ENCODE measurements at regions of chr22 and their contacts with region 1.

Region 1: DNA sequence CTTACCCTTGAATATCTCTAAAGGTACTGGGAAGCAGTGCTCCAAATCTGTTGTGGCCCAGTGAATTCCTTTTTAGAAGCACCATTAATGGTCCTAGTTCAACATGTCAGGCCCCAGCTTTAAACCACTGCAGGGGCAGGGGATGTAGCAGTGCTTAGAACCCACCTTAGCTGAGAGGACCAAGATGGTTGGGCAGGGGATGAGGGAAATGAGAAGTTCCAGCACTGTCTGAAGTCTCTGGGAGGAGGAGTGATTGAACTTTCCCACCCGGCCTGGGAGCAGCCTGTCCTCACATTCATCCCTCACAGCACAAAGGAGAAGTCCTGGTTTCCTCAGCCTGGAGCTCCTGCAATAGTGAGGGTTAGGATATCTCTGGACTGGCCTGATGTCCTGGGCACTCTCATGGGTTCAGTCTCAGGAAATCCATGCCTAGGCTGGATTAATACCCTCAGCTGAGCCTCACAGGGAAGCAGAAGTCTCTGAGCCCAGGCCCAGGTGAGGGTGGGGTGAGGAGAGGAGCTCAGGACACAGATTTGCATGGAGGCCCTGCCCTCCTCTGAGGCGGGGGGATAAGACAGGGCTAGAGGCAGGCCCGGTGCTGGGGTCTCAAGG is 28.6 kb upstream of the PRAME start:
- DNase-seq: no peak
- H3K4me3 ChIP-seq: no peak overlapping the region
- H3K27ac ChIP-seq: no peak overlapping the region
- H3K4me1 ChIP-seq: no peaks in the 10 kb centered on the region
- H3K27me3 ChIP-seq: peaks cover 11% of the 10 kb centered on the region
- CTCF ChIP-seq: no peak

Region 2: DNA sequence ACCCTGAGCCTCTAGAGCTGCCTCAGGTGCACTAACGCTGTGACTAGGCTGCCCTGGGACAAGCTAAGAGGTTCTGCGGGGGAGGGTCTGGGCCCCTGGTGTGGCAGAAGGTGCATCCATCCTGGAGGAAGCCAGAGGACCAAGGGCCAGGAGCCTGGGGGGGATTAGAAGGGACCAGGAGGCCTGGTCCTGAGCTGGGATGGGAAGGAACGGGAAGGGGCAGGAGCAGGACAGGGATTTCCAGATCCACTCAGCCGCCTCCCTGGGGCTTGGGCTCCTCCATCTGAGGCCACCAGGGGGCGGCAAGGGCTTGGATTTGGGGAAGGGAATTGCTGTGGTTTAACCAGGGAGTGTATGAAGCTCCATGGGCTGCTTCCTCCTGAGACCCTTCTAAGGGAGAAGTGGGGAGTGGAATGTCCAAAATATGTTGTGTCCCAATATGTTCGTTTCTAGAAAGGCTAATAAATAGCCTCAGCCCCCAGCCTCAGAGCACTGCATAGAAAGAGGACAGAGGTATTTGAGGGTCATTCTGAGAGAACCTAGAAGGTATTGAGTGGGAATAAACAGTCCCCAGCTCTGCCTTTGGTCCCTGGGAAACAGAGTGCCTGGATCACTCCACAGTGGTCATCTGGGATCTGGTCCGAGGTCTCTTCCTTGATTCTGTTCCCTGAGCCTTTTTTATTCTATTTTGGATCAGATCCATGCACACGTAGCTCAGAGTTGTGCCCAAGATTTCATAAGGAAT is 11.3 kb before region 1 on chr22:
- CTCF ChIA-PET with region 1: interaction called, 28 read pairs
- POLR2A ChIA-PET with region 1: no interaction called
- intact Hi-C with region 1: no loop called
- DNase-seq: peak; percentile 75
- H3K4me3 ChIP-seq: no peak overlapping the region
- H3K27ac ChIP-seq: no peak overlapping the region
- H3K4me1 ChIP-seq: peaks cover 3% of the 10 kb centered on the region
- H3K27me3 ChIP-seq: peaks cover 8% of the 10 kb centered on the region
- CTCF ChIP-seq: peak; percentile 86

Region 3: DNA sequence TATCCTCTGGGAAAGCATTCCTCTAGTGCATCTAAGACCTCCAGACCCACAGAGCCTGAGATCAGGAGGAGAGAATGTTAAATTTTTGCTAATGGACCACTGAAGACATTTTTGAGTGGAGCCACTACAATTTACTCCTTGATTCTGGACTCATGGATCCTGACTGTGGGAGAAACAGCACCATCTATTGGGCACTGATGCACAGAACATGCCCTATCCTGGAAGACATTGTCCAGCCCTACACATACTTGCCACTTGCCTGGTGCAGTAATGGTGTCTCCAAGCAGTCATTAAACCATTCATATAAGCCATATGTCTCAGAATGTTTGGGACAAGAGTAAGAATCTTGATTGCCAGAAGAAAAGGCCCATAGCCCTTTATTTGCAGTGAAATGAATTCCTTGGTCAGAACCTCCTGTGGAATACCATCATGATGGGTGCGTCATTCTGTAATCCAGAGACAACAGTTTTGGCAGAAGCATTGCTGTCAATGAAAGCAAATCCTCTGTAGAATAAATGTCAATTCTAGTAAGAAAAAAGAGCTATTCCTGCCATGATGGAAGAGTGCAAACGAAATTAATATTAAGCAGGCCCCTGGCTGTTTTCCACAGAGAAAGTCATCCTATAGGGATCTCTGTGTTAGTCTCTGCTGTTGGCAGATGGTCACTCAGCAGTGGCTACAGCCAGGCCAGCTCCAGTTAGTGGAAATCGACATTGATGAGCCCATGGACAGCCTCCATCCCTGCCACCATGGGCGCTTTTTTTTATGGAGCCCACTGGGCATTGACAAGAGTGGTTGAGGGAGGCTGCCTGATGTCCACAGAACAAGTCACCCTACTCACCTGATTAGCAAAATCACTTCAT is 100.2 kb after region 1 on chr22:
- CTCF ChIA-PET with region 1: no interaction called
- POLR2A ChIA-PET with region 1: no interaction called
- intact Hi-C with region 1: loop called (anchors 10 kb)
- DNase-seq: peak; percentile 48
- H3K4me3 ChIP-seq: no peak overlapping the region
- H3K27ac ChIP-seq: no peak overlapping the region
- H3K4me1 ChIP-seq: no peaks in the 10 kb centered on the region
- H3K27me3 ChIP-seq: no peaks in the 10 kb centered on the region
- CTCF ChIP-seq: peak; percentile 76

Measured in A673 (cell line).